A549 (cell line): ENCODE measurements at regions of chr1 and their contacts with region 1.

Region 1: DNA sequence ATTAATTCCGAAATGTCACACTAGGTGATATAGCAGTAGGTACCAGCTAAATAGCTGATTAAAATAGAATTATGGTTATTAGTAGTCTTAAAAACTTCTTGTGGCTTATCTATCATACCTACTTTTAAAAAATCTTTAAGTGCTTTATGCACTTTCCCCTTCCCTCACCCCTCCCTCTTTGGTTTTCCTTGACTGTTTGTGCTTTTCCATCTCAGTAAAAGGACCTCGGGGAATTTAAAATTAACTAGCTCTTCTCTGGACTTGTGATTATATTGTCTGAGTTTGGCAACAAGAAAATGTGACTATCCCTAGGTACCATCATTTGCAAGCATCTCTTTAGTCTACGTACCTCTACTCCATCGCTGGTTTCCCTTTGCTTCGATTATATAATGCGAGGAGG is 11.2 kb downstream of the COX20 start:
- DNase-seq: no peak
- ATAC-seq: no peak
- H3K4me3 ChIP-seq: no peak overlapping the region
- H3K27ac ChIP-seq: no peak overlapping the region
- H3K4me1 ChIP-seq: peaks cover 34% of the 10 kb centered on the region; the same call in 2 of the 3 replicates
- CTCF ChIP-seq: no peak
- EP300 ChIP-seq: no peak
- POLR2A ChIP-seq: no peak
- RAD21 ChIP-seq: no peak

Region 2: DNA sequence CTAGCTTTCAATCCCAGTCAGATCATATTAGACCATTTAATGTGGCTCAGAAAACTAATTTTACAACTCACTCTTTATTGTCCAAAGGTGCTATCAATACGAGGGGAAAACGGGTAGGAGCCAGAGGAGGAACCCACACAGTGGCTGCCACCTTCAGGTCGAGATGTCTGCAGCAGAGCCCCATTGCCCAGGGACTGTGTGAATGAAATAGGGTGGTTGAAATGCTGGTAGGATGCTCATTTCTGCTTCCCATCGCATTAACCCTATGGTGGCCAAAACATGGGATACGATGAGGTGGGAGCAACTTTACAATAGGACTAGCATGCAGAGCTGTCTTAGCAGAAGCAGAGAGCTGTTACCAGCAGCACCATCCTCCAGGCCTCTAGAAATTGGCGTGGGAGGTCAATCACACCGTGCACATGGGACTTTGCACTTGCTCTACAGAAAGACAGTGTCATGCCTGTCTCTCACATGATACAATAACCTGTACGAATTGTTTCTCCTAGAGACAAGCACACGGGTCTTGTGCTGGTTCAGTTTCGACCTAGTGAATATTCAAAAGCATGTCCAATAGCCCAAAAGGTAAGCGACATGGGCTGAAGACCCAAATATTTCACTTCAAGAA is 263.2 kb before region 1 on chr1:
- CTCF ChIA-PET with region 1: no interaction called
- POLR2A ChIA-PET with region 1: no interaction called
- DNase-seq: no peak
- ATAC-seq: no peak
- H3K4me3 ChIP-seq: no peak overlapping the region
- H3K27ac ChIP-seq: no peak overlapping the region
- H3K4me1 ChIP-seq: peaks cover 4% of the 10 kb centered on the region; the same call in 1 of the 3 replicates
- CTCF ChIP-seq: no peak
- EP300 ChIP-seq: no peak
- POLR2A ChIP-seq: no peak
- RAD21 ChIP-seq: no peak

Region 3: DNA sequence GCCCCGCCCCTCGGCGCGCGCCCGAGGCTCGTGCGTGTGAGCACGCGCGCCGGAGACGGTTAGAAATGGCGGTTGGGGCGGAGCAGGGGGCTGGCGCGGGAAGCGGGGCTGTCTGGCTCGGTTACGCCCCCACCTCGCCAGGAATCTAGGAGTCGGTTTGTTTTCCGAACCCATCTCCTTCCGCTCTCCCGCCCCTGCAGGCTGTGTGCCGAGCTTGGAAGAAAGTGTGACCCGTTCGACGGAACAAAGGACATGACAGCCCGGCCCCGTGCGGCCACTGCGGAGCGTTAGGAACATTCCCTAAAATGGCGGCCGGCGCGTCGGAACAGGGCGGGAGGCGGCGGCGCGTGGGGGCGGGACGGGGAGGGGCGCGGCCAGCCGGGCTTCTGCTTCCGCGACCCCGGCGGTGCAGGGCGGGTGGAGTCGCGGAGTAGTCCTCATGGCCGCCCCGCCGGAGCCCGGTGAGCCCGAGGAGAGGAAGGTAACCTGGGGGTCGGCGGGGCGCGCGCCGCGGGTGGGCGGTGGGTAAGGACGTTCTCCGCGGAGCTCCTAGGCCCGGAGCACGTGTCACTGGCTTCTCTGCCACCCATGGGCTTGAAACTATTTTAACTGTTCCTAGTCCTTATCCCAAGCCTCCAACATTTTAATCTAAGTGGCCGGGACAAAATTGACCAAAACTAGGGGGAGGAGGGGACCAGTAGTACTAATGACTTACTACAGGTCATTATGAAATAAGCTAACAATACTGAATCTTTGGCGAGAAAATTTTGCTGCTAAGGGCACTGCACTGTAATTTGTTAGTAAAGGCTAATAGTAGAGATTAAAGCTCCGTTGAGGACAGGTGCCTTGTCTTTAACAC is 11.1 kb before region 1 on chr1 and contains the start of gene COX20:
- CTCF ChIA-PET with region 1: interaction called, 5 read pairs
- POLR2A ChIA-PET with region 1: interaction called, 16 read pairs
- DNase-seq: peak; percentile 66 to 95
- ATAC-seq: peak; percentile 72 to 78
- H3K4me3 ChIP-seq: peak within 1 kb of the TSS; percentile 69
- H3K27ac ChIP-seq: peak within 1 kb of the TSS; percentile 90 to 97
- H3K4me1 ChIP-seq: peaks cover 26% of the 10 kb centered on the region; the same call in 2 of the 3 replicates
- CTCF ChIP-seq: no peak
- EP300 ChIP-seq: no peak
- POLR2A ChIP-seq: peak; percentile 69
- RAD21 ChIP-seq: no peak
- polyA plus RNA-seq, gene COX20: 28.1 and 65.4 TPM in 2 replicates

Region 4: GRCh38 chr1:244874974-244875579 is 28.4 kb after region 1 on chr1:
- CTCF ChIA-PET with region 1: no interaction called
- POLR2A ChIA-PET with region 1: no interaction called
- DNase-seq: no peak
- ATAC-seq: no peak
- H3K4me3 ChIP-seq: no peak overlapping the region
- H3K27ac ChIP-seq: no peak overlapping the region
- H3K4me1 ChIP-seq: no peaks in the 10 kb centered on the region
- CTCF ChIP-seq: no peak
- EP300 ChIP-seq: no peak
- POLR2A ChIP-seq: no peak
- RAD21 ChIP-seq: no peak

Region 5: GRCh38 chr1:244887281-244887680 is 40.6 kb after region 1 on chr1:
- CTCF ChIA-PET with region 1: no interaction called
- POLR2A ChIA-PET with region 1: no interaction called
- DNase-seq: no peak
- ATAC-seq: no peak
- H3K4me3 ChIP-seq: no peak overlapping the region
- H3K27ac ChIP-seq: no peak overlapping the region
- H3K4me1 ChIP-seq: no peaks in the 10 kb centered on the region
- CTCF ChIP-seq: no peak
- EP300 ChIP-seq: no peak
- POLR2A ChIP-seq: no peak
- RAD21 ChIP-seq: no peak

Region 6: GRCh38 chr1:245272676-245273075 is 426.0 kb after region 1 on chr1:
- CTCF ChIA-PET with region 1: no interaction called
- POLR2A ChIA-PET with region 1: no interaction called
- DNase-seq: no peak
- ATAC-seq: no peak
- H3K4me3 ChIP-seq: no peak overlapping the region
- H3K27ac ChIP-seq: no peak overlapping the region
- H3K4me1 ChIP-seq: no peaks in the 10 kb centered on the region
- CTCF ChIP-seq: no peak
- EP300 ChIP-seq: no peak
- POLR2A ChIP-seq: no peak
- RAD21 ChIP-seq: no peak